CD4-positive, alpha-beta T cell (primary cell): ENCODE measurements at regions of chr1 and their contacts with region 1.

Region 1: DNA sequence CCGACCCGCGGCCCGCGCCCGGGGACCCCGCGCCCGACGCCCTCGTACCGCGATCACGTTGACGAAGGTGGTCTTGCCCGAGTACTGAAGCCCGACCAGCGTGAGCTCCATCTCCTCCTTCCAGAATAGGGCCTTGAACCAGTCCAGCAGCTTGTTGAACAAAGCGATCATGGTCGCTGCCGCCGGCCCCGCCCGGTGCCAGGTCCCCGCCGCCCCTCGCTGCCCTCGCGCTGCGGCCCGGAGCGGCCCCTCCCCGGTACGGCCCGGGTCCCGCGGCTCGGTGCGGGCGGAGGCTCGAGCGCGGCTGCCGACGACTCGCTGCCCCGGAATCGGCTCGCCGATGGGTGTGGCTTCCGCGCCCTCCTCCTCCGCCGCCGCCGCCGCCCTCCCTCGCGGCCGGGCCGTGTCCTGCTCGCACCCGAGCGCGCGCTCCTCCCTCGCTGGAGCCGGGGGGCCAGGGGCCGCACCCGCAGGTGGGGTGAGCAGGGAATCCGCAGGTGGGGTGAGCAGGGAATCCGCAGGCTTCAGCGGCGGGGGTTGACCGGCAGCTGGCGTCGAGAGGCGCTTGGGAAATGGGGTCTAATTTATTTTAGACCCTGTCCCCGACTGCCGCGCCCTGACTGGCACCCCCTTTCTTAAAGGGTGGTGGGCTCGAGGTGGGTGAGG is at the start of gene ARL8A:
- DNase-seq: peak; percentile 35 to 83 (median 65)
- ATAC-seq: peak; percentile 75
- H3K4me3 ChIP-seq: peak within 1 kb of the TSS; percentile 89
- H3K4me3 Mint-ChIP-seq: peak within 1 kb of the TSS; percentile 97
- H3K27ac ChIP-seq: peak within 1 kb of the TSS; percentile 69 to 71
- H3K27ac Mint-ChIP-seq: peak within 1 kb of the TSS; percentile 94
- H3K4me1 ChIP-seq: peaks cover 40% of the 10 kb centered on the region
- H3K4me1 Mint-ChIP-seq: peaks cover 45% of the 10 kb centered on the region
- H3K27me3 ChIP-seq: no peaks in the 10 kb centered on the region
- H3K27me3 Mint-ChIP-seq: no peaks in the 10 kb centered on the region
- CTCF ChIP-seq: no peak
- total RNA-seq, gene ARL8A: 73.5 to 73.8 TPM

Region 2: GRCh38 chr1:201828820-201829774 is 315.4 kb before region 1 on chr1 and contains the start of gene IPO9:
- CTCF ChIA-PET with region 1: no interaction called
- POLR2A ChIA-PET with region 1: no interaction called
- intact Hi-C with region 1: loop called in 1 of 2 experiments (anchors 5 kb)
- DNase-seq: peak; percentile 90 to 98 (median 94)
- ATAC-seq: peak; percentile 91
- H3K4me3 ChIP-seq: peak within 1 kb of the TSS; percentile 94
- H3K4me3 Mint-ChIP-seq: peak within 1 kb of the TSS; percentile 95
- H3K27ac ChIP-seq: peak within 1 kb of the TSS; percentile 84 to 90
- H3K27ac Mint-ChIP-seq: peak within 1 kb of the TSS; percentile 88
- H3K4me1 ChIP-seq: peaks cover 33% of the 10 kb centered on the region
- H3K4me1 Mint-ChIP-seq: peaks cover 44% of the 10 kb centered on the region
- H3K27me3 ChIP-seq: no peaks in the 10 kb centered on the region
- H3K27me3 Mint-ChIP-seq: no peaks in the 10 kb centered on the region
- CTCF ChIP-seq: peak; percentile 97
- total RNA-seq, gene IPO9: 17.1 to 20.1 TPM

Region 3: DNA sequence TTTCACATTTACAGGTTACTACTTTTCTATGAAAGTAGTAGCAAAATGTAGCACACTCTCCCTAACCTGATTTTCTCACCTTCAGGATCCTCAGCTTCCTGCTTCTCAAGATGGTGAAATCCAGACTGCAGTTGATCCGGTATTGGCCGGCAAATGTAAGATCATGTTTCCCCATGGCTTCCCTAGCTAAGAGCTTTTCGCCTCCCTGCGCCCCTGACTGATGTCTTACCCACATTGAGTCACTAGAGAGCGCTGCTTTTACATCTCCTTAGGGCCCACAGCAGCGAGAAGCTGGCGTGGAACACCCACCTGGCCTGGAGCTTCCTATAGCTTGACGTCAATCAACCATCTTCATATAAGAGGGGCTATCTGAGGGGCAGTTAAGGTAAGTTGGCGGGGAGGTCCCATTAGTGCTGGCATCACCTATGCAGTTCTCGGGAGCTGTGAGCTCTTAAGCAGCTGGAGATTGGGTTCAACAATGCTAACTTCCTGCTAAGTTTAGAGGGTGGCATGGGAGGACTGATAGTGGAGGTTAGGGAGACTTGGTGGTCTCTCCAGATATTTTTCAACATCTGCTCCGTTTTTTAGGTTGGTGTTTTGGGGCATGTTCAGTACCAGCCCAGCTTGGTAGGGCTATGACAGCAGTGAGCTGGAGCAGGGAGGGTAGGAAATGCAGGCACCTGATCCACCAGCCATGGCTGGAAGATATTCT is 10.4 kb after region 1 on chr1:
- CTCF ChIA-PET with region 1: interaction called, 15 read pairs
- POLR2A ChIA-PET with region 1: interaction called, 66 read pairs
- intact Hi-C with region 1: no loop called
- DNase-seq: peak in 11 of 14 experiments; percentile 34 to 81 (median 44)
- ATAC-seq: peak; percentile 81
- H3K4me3 ChIP-seq: no peak overlapping the region
- H3K4me3 Mint-ChIP-seq: peak overlapping the region; percentile 2
- H3K27ac ChIP-seq: peak overlapping the region in 1 of 2 donors; percentile 56
- H3K27ac Mint-ChIP-seq: peak overlapping the region; percentile 59
- H3K4me1 ChIP-seq: peaks cover 66% of the 10 kb centered on the region
- H3K4me1 Mint-ChIP-seq: peaks cover 51% of the 10 kb centered on the region
- H3K27me3 ChIP-seq: no peaks in the 10 kb centered on the region
- H3K27me3 Mint-ChIP-seq: no peaks in the 10 kb centered on the region
- CTCF ChIP-seq: peak; percentile 55

Region 4: DNA sequence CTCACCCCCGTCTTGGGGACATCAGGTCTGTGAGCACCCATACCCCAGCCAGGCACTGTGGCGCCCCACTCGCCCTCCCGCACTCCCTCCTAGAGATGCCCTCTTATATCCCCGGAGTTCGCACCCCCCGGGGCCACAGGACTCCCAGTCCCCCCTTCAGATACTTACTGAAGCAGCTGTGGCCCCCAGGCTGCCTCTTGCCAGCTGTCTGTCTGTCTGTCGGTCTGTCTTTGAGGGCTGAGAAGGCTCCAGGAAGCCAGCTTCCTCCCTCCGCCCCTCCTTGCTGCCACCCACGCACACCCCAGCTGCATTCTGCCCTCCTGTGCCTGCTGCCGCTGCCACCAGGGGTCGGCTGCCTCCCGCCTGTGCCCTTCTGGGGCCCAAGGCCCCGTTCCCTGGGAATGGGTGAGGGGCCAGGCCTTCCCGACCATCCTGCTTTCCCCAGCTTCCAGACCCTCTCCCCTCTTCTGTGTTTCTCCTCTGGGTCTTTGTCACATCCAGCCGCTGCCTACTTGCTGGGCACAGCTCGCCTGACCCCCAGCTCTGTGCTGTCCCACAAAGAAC is 15.9 kb after region 1 on chr1 and contains the start of gene PTPN7:
- CTCF ChIA-PET with region 1: interaction called, 8 read pairs
- POLR2A ChIA-PET with region 1: interaction called, 66 read pairs
- intact Hi-C with region 1: no loop called
- DNase-seq: peak; percentile 67 to 89 (median 78)
- ATAC-seq: peak; percentile 68
- H3K4me3 ChIP-seq: peak within 1 kb of the TSS; percentile 89
- H3K4me3 Mint-ChIP-seq: peak within 1 kb of the TSS; percentile 99
- H3K27ac ChIP-seq: peak within 1 kb of the TSS; percentile 94 to 97
- H3K27ac Mint-ChIP-seq: peak within 1 kb of the TSS; percentile 99
- H3K4me1 ChIP-seq: peaks cover 98% of the 10 kb centered on the region
- H3K4me1 Mint-ChIP-seq: peaks cover 92% of the 10 kb centered on the region
- H3K27me3 ChIP-seq: no peaks in the 10 kb centered on the region
- H3K27me3 Mint-ChIP-seq: no peaks in the 10 kb centered on the region
- CTCF ChIP-seq: peak; percentile 76
- total RNA-seq, gene PTPN7: 144 to 145 TPM